MCF 10A (cell line): ENCODE measurements at regions of chr17 and their contacts with region 1.

Region 1: DNA sequence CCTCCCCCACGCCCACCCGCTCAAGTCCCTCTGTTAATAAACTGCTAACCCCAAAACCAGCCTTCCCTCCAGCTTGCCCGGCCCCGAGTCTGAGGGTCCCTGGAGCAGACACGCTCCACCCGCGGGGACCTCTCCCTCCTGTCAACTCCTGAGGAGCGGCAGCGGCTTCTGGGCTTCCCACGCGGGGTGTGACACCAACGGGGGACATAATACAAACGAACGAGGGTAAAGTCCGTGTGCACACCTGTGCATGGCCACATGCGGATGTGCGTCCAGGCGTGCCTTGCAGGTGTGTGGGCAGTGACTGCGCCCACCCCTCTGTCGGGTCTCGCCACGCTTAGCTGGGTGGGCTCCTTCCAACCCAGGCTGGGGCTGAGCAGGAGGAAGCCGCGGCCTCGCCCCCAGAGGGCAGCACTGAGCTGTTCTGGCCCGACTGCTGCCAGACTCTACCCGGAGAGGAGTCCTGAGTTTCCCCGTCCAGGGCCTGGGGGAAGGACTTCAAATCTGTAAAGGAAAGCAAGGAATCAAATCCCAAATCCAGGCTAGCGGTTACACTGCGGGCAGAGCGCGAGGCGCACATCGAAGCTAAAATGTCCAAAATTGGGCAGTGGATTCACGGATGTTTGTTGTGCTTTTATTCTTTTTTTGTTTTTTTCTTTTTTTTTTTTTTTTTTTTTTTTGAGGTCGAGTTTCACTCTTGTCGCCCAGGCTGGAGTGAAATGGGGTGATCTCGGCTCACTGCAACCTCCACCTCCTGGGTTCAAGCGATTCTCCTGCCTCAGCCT is 24.2 kb upstream of the KRT17 start:
- DNase-seq: peak; percentile 87
- H3K4me3 Mint-ChIP-seq: peak overlapping the region; percentile 22
- H3K27ac Mint-ChIP-seq: peak overlapping the region; percentile 93
- H3K4me1 Mint-ChIP-seq: peaks cover 34% of the 10 kb centered on the region
- H3K27me3 Mint-ChIP-seq: no peaks in the 10 kb centered on the region
- CTCF ChIP-seq: peak; percentile 88

Region 2: DNA sequence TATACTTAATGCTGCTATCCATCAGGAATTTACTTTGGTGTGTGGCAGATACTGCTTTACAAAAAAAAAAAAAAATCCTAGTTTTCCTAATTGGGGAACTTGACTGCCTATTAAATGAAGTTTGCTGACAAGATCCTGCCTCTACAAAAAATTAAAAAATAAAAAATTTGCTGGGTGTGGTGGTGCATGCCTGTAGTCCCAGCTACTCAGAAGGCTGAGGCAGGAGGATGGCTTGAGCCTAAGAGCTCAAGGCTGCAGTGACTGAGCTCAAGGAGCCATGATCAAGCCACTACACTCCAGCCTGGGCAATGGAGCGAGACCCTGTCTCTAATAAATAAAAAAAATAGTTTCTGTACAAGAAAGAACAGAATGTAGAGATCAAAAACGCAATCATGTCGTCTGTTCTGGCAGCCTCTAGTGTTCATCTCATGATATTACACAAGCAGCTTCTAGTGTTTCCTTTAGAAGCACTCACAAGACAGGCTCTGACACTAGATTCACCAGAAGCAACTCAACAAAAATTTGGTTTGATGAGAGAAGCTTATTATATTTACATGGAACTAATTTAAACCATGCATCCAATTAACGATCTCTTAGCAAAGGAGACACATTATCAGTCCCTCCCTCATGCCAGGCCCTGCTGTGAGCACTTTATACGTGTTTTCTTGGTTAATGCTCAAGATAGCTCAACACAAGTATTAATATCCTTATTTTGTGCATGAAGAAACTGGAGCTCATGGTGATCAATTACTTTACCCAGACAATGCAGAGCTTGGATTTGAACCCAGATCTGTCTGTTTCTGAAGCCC is 326.3 kb before region 1 on chr17:
- CTCF ChIA-PET with region 1: interaction called, 3 read pairs
- POLR2A ChIA-PET with region 1: no interaction called
- intact Hi-C with region 1: loop called (anchors 5 kb)
- DNase-seq: peak; percentile 61
- H3K4me3 Mint-ChIP-seq: no peak overlapping the region
- H3K27ac Mint-ChIP-seq: no peak overlapping the region
- H3K4me1 Mint-ChIP-seq: no peaks in the 10 kb centered on the region
- H3K27me3 Mint-ChIP-seq: no peaks in the 10 kb centered on the region
- CTCF ChIP-seq: peak; percentile 76

Region 3: DNA sequence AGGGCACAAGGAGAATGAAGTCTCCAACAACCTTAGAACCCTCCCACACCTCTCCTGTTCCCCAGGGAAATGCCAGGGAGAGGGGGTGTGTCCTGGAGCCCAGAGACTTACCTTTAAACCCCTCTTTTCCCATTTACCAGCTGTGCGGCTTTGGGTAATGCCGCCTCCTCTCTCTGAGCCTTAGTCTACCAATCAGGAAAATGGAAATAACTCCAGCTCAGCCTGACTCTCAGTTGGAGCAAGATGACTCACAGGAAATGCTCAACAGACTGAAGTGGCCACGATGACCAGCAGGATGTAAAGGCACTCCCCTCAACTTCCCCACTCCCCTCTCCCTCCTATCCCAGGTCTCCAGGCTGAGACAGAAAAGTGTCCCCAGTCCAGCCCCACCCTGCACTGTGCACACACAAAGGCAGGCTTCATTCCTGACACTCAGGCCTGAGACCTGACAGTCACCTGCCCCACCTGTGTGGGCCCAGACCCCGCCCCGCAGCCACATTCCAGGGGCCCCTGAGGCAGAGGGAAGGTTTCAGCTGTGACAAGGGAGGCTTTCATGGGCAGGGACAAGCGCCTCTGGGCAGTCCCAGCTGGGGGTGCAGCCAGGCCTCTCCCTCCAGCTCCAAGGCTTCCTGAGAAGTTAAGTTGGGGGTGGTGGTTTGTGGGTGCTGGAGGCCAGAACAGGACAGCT is 126.9 kb before region 1 on chr17:
- CTCF ChIA-PET with region 1: interaction called, 7 read pairs
- POLR2A ChIA-PET with region 1: interaction called, 49 read pairs
- intact Hi-C with region 1: no loop called
- DNase-seq: peak; percentile 87
- H3K4me3 Mint-ChIP-seq: peak overlapping the region; percentile 49
- H3K27ac Mint-ChIP-seq: peak overlapping the region; percentile 88
- H3K4me1 Mint-ChIP-seq: peaks cover 55% of the 10 kb centered on the region
- H3K27me3 Mint-ChIP-seq: no peaks in the 10 kb centered on the region
- CTCF ChIP-seq: no peak

Region 4: DNA sequence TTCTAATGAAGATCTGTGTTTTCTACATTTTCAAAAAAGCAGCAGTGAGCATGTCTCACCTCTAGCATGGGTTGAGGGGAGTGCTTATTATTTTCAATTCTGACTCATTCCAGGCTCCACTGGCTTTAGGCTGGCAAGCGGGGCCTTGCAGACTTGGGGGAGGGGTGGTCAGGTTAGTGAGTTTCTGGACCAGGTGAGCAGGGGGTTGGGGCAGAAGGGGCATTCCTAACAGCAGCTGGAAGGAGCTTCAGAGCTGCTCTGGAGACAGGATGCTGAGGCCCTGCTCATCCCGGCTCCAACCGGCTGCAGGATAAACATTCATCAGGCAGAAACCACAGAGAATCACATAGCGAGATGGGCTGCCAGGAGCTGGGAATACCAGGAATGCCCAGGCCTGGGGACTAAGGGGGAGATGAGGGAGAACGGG is 110.0 kb before region 1 on chr17:
- CTCF ChIA-PET with region 1: interaction called, 11 read pairs
- POLR2A ChIA-PET with region 1: interaction called, 3 read pairs
- intact Hi-C with region 1: no loop called
- DNase-seq: peak; percentile 65
- H3K4me3 Mint-ChIP-seq: no peak overlapping the region
- H3K27ac Mint-ChIP-seq: no peak overlapping the region
- H3K4me1 Mint-ChIP-seq: peaks cover 34% of the 10 kb centered on the region
- H3K27me3 Mint-ChIP-seq: no peaks in the 10 kb centered on the region
- CTCF ChIP-seq: no peak

Region 5: DNA sequence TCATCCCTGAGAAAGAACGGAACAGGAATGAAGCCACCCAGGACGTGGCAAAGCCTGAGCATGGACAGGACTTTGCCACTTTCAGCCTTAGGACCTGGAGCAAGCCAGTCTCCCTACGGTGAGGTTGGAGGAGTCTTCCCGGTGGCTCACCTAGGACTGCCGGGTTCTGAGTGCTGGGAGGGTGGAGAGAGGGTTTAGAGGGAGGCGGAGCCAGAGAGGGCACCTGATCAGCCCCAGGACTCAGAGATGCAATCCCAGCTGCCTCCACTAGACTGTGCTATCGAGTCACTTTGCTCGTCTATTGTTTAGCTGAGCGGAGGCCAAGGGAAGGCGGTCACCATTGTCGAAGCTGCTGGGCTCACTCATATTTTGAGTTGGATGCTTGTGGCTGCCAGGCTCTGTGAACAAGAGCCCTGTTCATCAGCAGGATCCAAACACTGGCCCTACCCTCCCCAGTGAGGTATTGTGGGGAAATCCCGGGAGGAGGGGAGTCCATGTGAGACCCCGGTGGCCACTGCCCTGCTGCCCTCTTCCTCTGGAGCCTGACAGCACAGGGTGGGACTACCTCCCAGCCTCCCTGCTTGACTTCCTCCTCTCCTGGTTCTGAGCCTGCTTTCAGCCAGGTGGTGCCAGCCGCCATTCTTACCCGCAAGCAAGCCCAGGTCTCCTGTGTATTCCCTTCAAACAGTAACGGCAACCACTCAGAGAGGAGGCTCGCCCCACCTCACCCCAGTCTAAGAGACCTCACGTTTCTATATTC is 68.9 kb before region 1 on chr17:
- CTCF ChIA-PET with region 1: interaction called, 45 read pairs
- POLR2A ChIA-PET with region 1: interaction called, 9 read pairs
- intact Hi-C with region 1: loop called (anchors 1 kb)
- DNase-seq: peak; percentile 96
- H3K4me3 Mint-ChIP-seq: peak overlapping the region; percentile 1
- H3K27ac Mint-ChIP-seq: peak overlapping the region; percentile 97
- H3K4me1 Mint-ChIP-seq: peaks cover 60% of the 10 kb centered on the region
- H3K27me3 Mint-ChIP-seq: no peaks in the 10 kb centered on the region
- CTCF ChIP-seq: peak; percentile 87

Region 6: GRCh38 chr17:41624208-41625101 is 24.1 kb before region 1 on chr17 and contains the start of gene KRT17:
- CTCF ChIA-PET with region 1: interaction called, 13 read pairs
- POLR2A ChIA-PET with region 1: interaction called, 366 read pairs
- intact Hi-C with region 1: no loop called
- DNase-seq: peak; percentile 93
- H3K4me3 Mint-ChIP-seq: peak within 1 kb of the TSS; percentile 86
- H3K27ac Mint-ChIP-seq: peak within 1 kb of the TSS; percentile 89
- H3K4me1 Mint-ChIP-seq: peaks cover 47% of the 10 kb centered on the region
- H3K27me3 Mint-ChIP-seq: no peaks in the 10 kb centered on the region
- CTCF ChIP-seq: peak; percentile 19
- total RNA-seq, gene KRT17: 1,990 and 4,105 TPM in 2 replicates

Region 7: DNA sequence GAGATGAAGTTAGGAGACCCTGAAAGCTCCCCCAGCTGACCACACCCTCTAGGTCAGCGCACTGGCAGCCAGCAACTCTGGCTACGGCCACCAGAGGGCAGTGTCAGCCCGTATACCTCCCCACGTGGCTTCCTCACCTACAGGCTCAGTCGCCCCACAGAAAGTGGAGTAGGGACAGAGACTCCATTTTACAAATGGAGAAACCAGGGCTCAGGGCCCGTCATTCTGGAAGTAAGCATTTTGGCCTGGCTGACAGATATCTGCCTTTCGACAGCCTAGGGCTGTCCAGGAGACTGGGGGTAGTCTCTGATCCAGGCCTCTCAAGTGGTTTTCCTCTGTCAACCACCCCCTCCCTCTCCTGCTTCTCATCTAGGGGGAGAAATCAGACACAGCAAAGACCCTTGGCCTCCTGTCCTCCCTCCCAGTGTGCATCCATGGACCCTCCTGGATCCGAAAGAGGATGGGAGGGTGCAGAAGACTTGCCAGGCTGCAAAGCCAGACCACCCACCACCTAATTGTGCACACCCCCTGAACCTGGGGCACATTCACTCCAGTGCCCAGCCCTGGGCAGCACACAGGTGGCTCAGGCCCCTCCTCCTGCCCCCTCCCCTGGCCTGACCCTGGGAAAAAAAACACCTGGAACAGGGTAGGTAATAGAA is 89.6 kb after region 1 on chr17:
- CTCF ChIA-PET with region 1: no interaction called
- POLR2A ChIA-PET with region 1: no interaction called
- intact Hi-C with region 1: no loop called
- DNase-seq: peak; percentile 82
- H3K4me3 Mint-ChIP-seq: no peak overlapping the region
- H3K27ac Mint-ChIP-seq: peak overlapping the region; percentile 42
- H3K4me1 Mint-ChIP-seq: peaks cover 16% of the 10 kb centered on the region
- H3K27me3 Mint-ChIP-seq: peaks cover 40% of the 10 kb centered on the region
- CTCF ChIP-seq: peak; percentile 95